Right cardiac atrium (tissue), 5 donors: ENCODE measurements at regions of chr11 and their contacts with region 1.

Region 1: DNA sequence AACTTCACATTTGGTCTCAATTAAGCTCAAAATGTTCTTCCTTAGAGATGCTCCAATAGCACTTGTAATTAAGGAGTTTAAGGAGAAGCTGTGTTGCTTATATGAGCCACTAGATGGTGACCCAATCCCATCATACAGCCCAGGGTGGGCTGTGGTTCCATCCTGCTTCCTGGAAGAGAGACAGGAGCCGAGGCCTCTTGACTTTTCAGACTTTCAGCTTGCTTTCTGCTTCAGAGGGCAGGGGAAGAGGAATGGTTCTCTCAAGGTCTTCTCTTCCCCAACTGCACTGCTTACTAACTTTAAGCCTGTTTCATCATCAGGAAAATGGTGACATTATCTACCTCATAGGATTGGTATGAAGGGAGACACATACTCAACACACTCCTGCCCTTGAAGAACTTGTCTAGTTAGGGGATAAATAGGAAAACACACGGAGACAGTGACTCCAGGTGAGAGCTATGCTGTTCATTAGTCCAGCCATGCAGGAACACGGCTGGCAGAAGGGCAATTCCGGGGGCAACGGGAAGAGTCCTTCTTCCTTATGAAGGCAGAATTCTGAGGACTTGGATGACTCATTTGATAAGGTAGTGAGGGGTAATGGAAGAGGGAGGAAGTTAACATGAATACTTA is 20.1 kb downstream of the TMEM218 start:
- DNase-seq: peak in 1 of 3 donors; percentile 64
- ATAC-seq: peak; percentile 89 to 91
- H3K4me3 ChIP-seq: no peak overlapping the region
- H3K27ac ChIP-seq: no peak overlapping the region
- H3K4me1 ChIP-seq: peaks cover 4% of the 10 kb centered on the region
- H3K27me3 ChIP-seq: no peaks in the 10 kb centered on the region

Region 2: DNA sequence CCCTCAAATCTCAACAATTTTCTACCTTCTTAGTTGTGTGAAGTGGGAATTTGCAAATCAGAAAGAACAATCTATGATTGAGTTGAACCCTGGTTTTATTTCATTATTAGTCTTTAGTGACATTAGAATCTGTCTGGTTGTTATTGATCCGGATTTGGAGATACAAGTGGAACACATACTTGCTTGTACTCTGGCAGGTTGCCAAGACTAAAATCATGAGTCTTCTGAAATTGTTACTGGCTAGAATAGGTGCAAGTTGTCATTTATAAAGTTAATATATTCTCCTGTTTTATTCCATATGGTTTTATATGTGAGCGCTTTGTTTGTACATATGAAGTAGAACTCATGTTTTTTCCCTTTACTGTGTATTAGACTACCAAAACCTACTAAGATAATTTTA is 114.4 kb before region 1 on chr11:
- intact Hi-C with region 1: no loop called
- DNase-seq: no peak
- ATAC-seq: no peak
- H3K4me3 ChIP-seq: no peak overlapping the region
- H3K27ac ChIP-seq: no peak overlapping the region
- H3K4me1 ChIP-seq: no peaks in the 10 kb centered on the region
- H3K27me3 ChIP-seq: no peaks in the 10 kb centered on the region

Region 3: GRCh38 chr11:125141686-125142535 is 50.5 kb after region 1 on chr11:
- intact Hi-C with region 1: loop called in 2 of 4 experiments (anchors 5 to 10 kb)
- DNase-seq: peak; percentile 40 to 74 (median 70)
- ATAC-seq: peak; percentile 70 to 85
- H3K4me3 ChIP-seq: no peak overlapping the region
- H3K27ac ChIP-seq: no peak overlapping the region
- H3K4me1 ChIP-seq: no peaks in the 10 kb centered on the region
- H3K27me3 ChIP-seq: no peaks in the 10 kb centered on the region

Region 4: GRCh38 chr11:125345421-125346178 is 254.2 kb after region 1 on chr11:
- intact Hi-C with region 1: loop called in 2 of 4 experiments (anchors 5 to 10 kb)
- DNase-seq: peak; percentile 83 to 94 (median 92)
- ATAC-seq: peak; percentile 78 to 83
- H3K4me3 ChIP-seq: no peak overlapping the region
- H3K27ac ChIP-seq: peak overlapping the region; percentile 54
- H3K4me1 ChIP-seq: peaks cover 7% of the 10 kb centered on the region
- H3K27me3 ChIP-seq: no peaks in the 10 kb centered on the region

Region 5: GRCh38 chr11:125404776-125405435 is 313.5 kb after region 1 on chr11:
- intact Hi-C with region 1: loop called in 1 of 4 experiments (anchors 10 kb)
- DNase-seq: peak; percentile 71 to 91 (median 90)
- ATAC-seq: peak; percentile 84 to 88
- H3K4me3 ChIP-seq: no peak overlapping the region
- H3K27ac ChIP-seq: no peak overlapping the region
- H3K4me1 ChIP-seq: peaks cover 7% of the 10 kb centered on the region
- H3K27me3 ChIP-seq: no peaks in the 10 kb centered on the region

Region 6: DNA sequence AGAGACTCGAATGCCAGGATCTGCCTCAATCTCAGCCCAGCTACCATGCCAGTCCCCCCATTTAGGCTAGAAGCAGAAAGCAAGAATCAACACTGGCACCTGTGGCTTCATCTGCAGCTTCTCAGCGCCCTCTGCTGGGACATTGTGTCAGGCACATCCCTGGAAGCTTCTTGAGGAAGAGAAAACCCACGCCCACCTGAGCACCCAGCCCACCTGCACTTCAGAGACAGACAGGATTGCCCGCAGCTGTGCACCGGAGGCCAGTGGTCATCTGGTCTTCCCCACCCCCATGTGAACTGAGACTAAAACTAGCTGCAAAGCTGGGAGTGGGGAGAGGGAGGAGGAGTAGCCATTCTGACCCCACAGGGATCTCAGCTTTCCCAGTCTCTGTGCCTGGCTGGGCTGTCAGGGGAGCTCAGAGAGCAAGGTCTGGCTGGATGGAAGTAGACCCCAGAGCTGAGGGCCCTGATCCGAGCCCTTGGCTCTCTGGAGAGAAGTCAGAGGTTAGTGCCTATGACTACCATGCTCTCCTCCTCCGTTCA is 337.9 kb after region 1 on chr11:
- intact Hi-C with region 1: loop called in 2 of 4 experiments (anchors 10 kb)
- DNase-seq: peak; percentile 47 to 83 (median 80)
- ATAC-seq: no peak
- H3K4me3 ChIP-seq: no peak overlapping the region
- H3K27ac ChIP-seq: no peak overlapping the region
- H3K4me1 ChIP-seq: peaks cover 3% of the 10 kb centered on the region
- H3K27me3 ChIP-seq: no peaks in the 10 kb centered on the region